Activated naive CD4-positive, alpha-beta T cell treated with anti-CD3 and anti-CD28 coated beads for 36 hours (primary cell): ENCODE measurements at regions of chr13 and their contacts with region 1.

Region 1: GRCh38 chr13:78595495-78596398 is 7.6 kb downstream of the POU4F1 start:
- DNase-seq: no peak
- H3K4me3 Mint-ChIP-seq: peak overlapping the region; percentile 29
- H3K27ac Mint-ChIP-seq: no peak overlapping the region
- H3K4me1 Mint-ChIP-seq: peaks cover 10% of the 10 kb centered on the region
- H3K27me3 Mint-ChIP-seq: peaks cover 75% of the 10 kb centered on the region

Region 2: GRCh38 chr13:77789376-77789775 is 806.4 kb before region 1 on chr13:
- CTCF ChIA-PET with region 1: no interaction called
- intact Hi-C with region 1: no loop called
- DNase-seq: no peak
- H3K4me3 Mint-ChIP-seq: no peak overlapping the region
- H3K27ac Mint-ChIP-seq: no peak overlapping the region
- H3K4me1 Mint-ChIP-seq: no peaks in the 10 kb centered on the region
- H3K27me3 Mint-ChIP-seq: no peaks in the 10 kb centered on the region

Region 3: GRCh38 chr13:78608688-78609463 is 13.1 kb after region 1 on chr13:
- CTCF ChIA-PET with region 1: interaction called, 4 read pairs
- intact Hi-C with region 1: loop called (anchors 1 kb)
- DNase-seq: no peak
- H3K4me3 Mint-ChIP-seq: peak overlapping the region; percentile 54
- H3K27ac Mint-ChIP-seq: no peak overlapping the region
- H3K4me1 Mint-ChIP-seq: peaks cover 27% of the 10 kb centered on the region
- H3K27me3 Mint-ChIP-seq: peaks cover 66% of the 10 kb centered on the region